T-cell (primary cell): ENCODE measurements at regions of chr3 and their contacts with region 1.

Region 1: DNA sequence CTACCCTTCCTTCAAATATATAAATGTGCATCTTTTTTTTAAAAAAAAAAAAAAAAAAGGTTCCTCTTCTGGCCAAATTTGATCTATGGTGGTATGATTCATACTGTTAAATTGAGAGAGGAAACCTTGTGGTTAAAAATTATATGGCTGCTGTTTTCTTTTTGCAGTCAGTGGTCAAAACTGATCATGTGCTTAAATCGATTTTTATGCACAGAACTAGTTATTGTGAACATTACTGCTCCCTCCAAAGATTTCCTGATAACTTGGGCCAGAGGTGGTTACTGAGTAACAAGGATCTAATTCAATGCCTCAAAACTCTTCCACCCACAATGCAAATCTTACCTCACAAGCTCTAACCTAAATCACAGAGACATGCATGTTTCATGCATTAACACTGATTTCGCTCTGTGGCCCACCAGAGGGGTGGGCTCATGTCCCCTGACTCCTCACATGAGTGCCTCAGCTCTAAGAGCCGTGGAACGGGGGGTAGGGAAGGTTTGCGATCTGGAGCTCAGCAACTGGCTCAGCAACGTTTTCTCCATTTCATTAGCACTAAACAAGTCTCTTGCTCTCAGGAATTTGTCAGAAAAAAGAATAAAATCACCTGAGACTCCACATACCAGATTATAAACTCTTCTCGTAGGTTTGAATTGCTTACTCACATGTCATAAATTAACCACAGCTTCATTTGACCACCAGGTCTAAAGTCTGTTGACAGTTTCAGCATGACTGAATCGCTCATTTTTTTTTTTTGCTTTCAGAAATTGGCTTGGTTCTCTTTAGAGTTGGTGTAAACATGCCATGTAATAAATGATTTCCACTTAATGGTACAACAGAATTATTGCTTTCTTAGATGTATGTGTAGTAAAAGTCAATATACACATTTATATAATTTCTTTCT is 280.4 kb downstream of the CD47 start:
- DNase-seq: no peak
- ATAC-seq: peak in 1 of 4 experiments; percentile 12
- H3K4me3 ChIP-seq: no peak overlapping the region
- H3K4me3 Mint-ChIP-seq: no peak overlapping the region
- H3K27ac ChIP-seq: no peak overlapping the region
- H3K27ac Mint-ChIP-seq: peak overlapping the region; percentile 5 to 56
- H3K4me1 ChIP-seq: no peaks in the 10 kb centered on the region
- H3K4me1 Mint-ChIP-seq: peaks cover 0 to 18% (median 12%) of the 10 kb centered on the region in 3 donors
- H3K27me3 ChIP-seq: no peaks in the 10 kb centered on the region
- H3K27me3 Mint-ChIP-seq: no peaks in the 10 kb centered on the region

Region 2: DNA sequence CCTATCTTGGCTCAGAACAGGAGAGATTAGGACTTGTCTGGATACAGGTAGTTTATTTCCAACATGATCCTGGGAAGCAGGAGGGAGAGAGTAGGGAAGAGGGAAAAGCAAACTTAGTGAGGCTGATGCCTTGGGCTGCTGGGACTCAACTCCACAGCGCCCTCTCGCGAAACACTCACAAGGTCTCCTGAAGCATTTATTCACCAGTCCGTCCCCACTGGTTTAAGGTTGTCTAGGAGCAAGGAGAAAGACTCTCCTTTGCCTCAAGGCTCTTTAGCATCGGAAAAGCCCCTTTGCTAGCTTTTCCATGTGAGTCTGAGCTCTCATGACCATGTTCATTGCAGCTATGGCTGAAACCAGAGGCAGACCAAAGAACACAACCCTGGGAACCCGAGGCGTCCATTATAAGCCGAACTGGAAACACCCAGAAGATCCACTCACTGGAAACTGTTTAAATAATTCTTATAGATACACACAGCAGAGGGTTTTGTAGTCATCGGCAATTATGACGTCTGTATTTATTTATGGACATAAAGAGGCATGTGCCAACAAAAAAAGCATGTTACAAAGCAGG is 35.9 kb after region 1 on chr3:
- CTCF ChIA-PET with region 1: no interaction called
- POLR2A ChIA-PET with region 1: no interaction called
- DNase-seq: peak in 23 of 35 experiments; percentile 1 to 52 (median 17)
- ATAC-seq: no peak
- H3K4me3 ChIP-seq: no peak overlapping the region
- H3K4me3 Mint-ChIP-seq: no peak overlapping the region
- H3K27ac ChIP-seq: no peak overlapping the region
- H3K27ac Mint-ChIP-seq: no peak overlapping the region
- H3K4me1 ChIP-seq: no peaks in the 10 kb centered on the region
- H3K4me1 Mint-ChIP-seq: no peaks in the 10 kb centered on the region
- H3K27me3 ChIP-seq: no peaks in the 10 kb centered on the region
- H3K27me3 Mint-ChIP-seq: no peaks in the 10 kb centered on the region

Region 3: DNA sequence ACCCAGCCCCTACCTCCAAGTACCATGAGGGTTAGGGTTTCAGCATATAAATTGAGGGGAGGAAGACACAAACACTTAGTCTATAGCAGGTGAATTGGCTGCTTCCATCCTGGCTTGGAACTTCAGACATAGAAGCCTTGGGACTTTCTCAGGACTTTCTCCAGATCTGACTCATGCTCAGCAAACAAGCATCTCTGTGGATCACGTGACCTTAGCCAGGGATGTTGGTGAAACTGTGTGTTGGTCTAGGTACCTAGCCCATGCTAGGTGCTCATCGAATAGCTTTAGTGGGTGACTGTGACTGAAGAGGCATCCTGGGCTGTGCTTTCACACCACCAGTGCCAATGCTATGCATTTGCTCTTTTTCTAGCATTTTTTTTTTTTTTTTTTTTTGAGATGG is 221.5 kb after region 1 on chr3:
- CTCF ChIA-PET with region 1: no interaction called
- POLR2A ChIA-PET with region 1: interaction called in 1 of 2 experiments, 13 read pairs
- DNase-seq: no peak
- ATAC-seq: no peak
- H3K4me3 ChIP-seq: no peak overlapping the region
- H3K4me3 Mint-ChIP-seq: no peak overlapping the region
- H3K27ac ChIP-seq: no peak overlapping the region
- H3K27ac Mint-ChIP-seq: peak overlapping the region in 1 of 2 donors; percentile 52
- H3K4me1 ChIP-seq: peaks cover 0 to 3% of the 10 kb centered on the region in 2 experiments
- H3K4me1 Mint-ChIP-seq: peaks cover 15 to 20% (median 20%) of the 10 kb centered on the region in 3 donors
- H3K27me3 ChIP-seq: no peaks in the 10 kb centered on the region
- H3K27me3 Mint-ChIP-seq: no peaks in the 10 kb centered on the region